ENCODE measurements at regions of chr17 and their contacts with region 1.

Region 1: DNA sequence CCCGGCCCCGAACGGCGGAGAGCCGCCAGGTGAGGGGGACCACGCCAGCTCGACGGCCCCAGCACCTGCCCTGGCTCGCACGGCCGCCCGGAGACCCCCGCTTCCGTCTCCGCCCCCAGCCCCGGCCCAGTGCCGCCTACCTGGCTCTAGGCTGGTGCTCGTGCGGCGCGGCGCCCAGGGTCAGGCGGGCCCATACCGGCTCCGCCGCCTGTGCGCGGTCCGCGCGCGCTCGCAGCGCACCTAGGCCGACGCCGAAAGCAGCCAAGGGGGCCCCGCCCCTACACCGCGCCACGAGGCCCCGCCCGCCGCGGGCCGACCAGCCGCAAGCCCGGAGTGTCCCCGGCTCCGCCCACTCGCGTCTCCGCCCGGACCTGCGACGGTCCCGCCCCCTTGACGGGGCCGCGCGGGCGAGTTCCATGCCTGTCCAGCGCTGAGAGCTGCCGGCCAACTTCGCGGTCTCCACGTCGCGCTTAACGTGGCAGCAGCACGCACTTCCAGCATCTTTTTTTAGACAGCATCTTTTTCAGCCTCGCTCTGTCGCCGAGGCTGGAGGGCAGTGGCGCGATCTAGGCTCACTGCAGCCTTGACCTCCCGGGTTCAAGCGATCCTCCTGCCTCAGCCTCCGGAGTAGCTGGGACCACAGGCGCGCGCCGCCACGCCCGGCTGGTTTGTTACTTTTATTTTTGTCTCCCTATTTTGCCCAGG is at the start of gene SLC25A39:
- DNase-seq: peak; percentile 95 to 99 (median 97)
- ATAC-seq: peak; percentile 86 to 92 (median 90)
- H3K4me3 ChIP-seq: peak within 1 kb of the TSS; percentile 82 to 99 (median 94)
- H3K27ac ChIP-seq: peak within 1 kb of the TSS; percentile 58 to 98 (median 95)
- H3K4me1 ChIP-seq: peaks cover 5 to 38% (median 22%) of the 10 kb centered on the region in 12 donors
- H3K27me3 ChIP-seq: no peaks in the 10 kb centered on the region
- CTCF ChIP-seq: no peak
- POLR2A ChIP-seq: peak in 1 of 2 donors; percentile 81
- total RNA-seq, gene SLC25A39: 37.2 to 78.5 (median 49.7) TPM

Region 2: GRCh38 chr17:43917348-43918018 is 407.2 kb before region 1 on chr17:
- intact Hi-C with region 1: no loop called
- DNase-seq: peak in 3 of 5 donors; percentile 44 to 55 (median 47)
- ATAC-seq: peak in 3 of 4 donors; percentile 56 to 84 (median 74)
- H3K4me3 ChIP-seq: peak overlapping the region in 10 of 12 donors; percentile 22 to 59 (median 48)
- H3K27ac ChIP-seq: peak overlapping the region in 1 of 12 donors; percentile 12
- H3K4me1 ChIP-seq: peaks cover 0 to 14% (median 3%) of the 10 kb centered on the region in 12 donors
- H3K27me3 ChIP-seq: peaks cover 0 to 5% (median 0%) of the 10 kb centered on the region in 9 donors
- CTCF ChIP-seq: peak in 11 of 12 donors; percentile 22 to 67 (median 46)
- POLR2A ChIP-seq: no peak

Region 3: DNA sequence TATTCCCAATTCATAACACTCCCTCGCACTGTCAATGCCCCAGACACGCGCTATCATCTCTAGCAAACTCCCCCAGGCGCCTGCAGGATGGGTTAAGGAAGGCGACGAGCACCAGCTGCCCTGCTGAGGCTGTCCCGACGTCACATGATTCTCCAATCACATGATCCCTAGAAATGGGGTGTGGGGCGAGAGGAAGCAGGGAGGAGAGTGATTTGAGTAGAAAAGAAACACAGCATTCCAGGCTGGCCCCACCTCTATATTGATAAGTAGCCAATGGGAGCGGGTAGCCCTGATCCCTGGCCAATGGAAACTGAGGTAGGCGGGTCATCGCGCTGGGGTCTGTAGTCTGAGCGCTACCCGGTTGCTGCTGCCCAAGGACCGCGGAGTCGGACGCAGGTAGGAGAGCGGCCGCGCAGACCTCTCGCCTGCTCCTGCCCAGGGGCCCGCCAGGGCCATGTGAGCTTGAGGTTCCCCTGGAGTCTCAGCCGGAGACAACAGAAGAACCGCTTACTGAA is 20.3 kb after region 1 on chr17 and contains the start of gene GRN:
- intact Hi-C with region 1: loop called in 1 of 10 experiments (anchors 2 kb)
- DNase-seq: peak; percentile 93 to 95 (median 94)
- ATAC-seq: peak; percentile 98 to 99 (median 98)
- H3K4me3 ChIP-seq: peak within 1 kb of the TSS; percentile 43 to 99 (median 80)
- H3K27ac ChIP-seq: peak within 1 kb of the TSS; percentile 34 to 97 (median 83)
- H3K4me1 ChIP-seq: peaks cover 0 to 49% (median 12%) of the 10 kb centered on the region in 12 donors
- H3K27me3 ChIP-seq: no peaks in the 10 kb centered on the region
- CTCF ChIP-seq: no peak
- POLR2A ChIP-seq: peak in 1 of 2 donors; percentile 87
- total RNA-seq, gene GRN: 94.8 to 451 (median 196) TPM